ENCODE measurements at regions of chr16 and their contacts with region 1.

Region 1: DNA sequence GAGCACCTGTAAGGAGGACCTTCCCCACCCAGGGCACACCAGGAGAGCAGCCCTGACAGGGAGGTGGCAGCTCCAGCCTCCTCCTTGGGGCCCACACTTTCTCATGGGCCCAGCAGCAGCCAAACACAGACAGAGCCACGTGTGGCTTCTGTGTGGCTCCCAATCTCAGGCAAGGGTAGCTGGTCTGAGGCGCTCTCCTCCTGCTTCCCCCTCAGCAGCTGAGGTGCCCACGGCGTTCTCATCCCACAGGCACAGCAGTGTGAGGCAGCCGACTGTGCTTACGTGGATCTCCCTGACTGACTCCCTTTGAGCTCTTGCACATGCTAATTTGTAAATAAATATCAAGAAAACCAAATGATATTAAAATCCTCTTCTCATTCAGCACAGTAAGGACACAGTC is 30.9 kb downstream of the CMTM3 start:
- DNase-seq: no peak
- ATAC-seq: no peak
- H3K4me3 ChIP-seq: no peak overlapping the region
- H3K27ac ChIP-seq: no peak overlapping the region
- H3K4me1 ChIP-seq: no peaks in the 10 kb centered on the region
- H3K27me3 ChIP-seq: no peaks in the 10 kb centered on the region
- CTCF ChIP-seq: no peak

Region 2: GRCh38 chr16:66717112-66717675 is 81.8 kb after region 1 on chr16:
- CTCF ChIA-PET with region 1: no interaction called
- POLR2A ChIA-PET with region 1: interaction called, 25 read pairs
- intact Hi-C with region 1: no loop called
- DNase-seq: peak; percentile 47
- ATAC-seq: peak; percentile 83
- H3K4me3 ChIP-seq: no peak overlapping the region
- H3K27ac ChIP-seq: no peak overlapping the region
- H3K4me1 ChIP-seq: peaks cover 8% of the 10 kb centered on the region; the same call in 1 of the 2 replicates
- H3K27me3 ChIP-seq: no peaks in the 10 kb centered on the region
- CTCF ChIP-seq: peak; percentile 63